ENCODE measurements at regions of chr1 and their contacts with region 1.

Region 1: GRCh38 chr1:84620720-84621313 is 46.6 kb upstream of the CTBS start:
- DNase-seq: peak; percentile 57
- ATAC-seq: peak; percentile 93
- H3K4me3 ChIP-seq: peak overlapping the region; percentile 72
- H3K27ac ChIP-seq: peak overlapping the region; percentile 77
- H3K4me1 ChIP-seq: peaks cover 6% of the 10 kb centered on the region
- H3K27me3 ChIP-seq: no peaks in the 10 kb centered on the region
- CTCF ChIP-seq: peak; percentile 63
- POLR2A ChIP-seq: no peak
- RAD21 ChIP-seq: peak; percentile 49

Region 2: DNA sequence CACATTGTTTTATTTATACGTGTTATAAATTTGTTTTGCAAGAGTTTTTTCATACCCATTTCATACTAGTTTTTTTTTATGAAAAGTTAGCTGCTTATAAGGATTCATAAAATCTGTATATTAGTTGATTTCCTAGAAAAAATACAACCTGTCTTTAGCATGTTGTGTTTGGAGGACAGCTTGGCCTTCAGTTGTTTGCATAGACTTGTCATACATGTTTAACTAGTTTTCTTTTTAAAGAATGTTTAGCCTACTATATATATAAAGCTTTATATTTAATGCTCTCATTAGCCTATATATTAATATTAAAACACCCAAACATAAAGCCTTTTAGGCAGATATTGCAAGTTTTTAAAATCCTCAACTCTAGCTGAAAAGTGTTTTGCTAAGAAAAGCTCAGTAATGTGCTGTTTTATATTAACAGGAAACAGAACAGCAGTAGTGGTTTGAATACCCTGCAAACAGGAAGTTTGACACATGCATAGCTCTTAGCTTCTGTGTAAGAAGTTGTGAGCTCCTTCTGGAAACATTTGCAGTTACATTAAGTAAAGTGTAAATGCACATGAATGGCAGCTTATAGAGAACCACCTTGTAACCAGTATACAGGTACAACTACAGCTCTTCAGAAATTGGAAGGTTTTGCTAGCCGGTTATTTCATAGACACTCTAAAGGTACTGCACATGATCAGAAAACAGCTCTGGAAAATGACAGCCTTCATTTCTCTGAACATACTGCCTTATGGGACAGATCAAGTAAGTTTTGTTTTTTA is 476.8 kb before region 1 on chr1 and contains the start of gene PRKACB:
- CTCF ChIA-PET with region 1: no interaction called
- POLR2A ChIA-PET with region 1: no interaction called
- dilution Hi-C with region 1: no loop called
- in situ Hi-C with region 1: loop called (anchors 25 kb)
- intact Hi-C with region 1: loop called (anchors 2 kb)
- DNase-seq: peak; percentile 62
- ATAC-seq: peak; percentile 68
- H3K4me3 ChIP-seq: no peak within 1 kb of the TSS
- H3K27ac ChIP-seq: no peak within 1 kb of the TSS
- H3K4me1 ChIP-seq: peaks cover 5% of the 10 kb centered on the region
- H3K27me3 ChIP-seq: no peaks in the 10 kb centered on the region
- CTCF ChIP-seq: no peak
- POLR2A ChIP-seq: no peak
- RAD21 ChIP-seq: no peak
- total RNA-seq, gene PRKACB: 8.2 and 14.2 TPM in 2 replicates

Region 3: GRCh38 chr1:84478876-84479868 is 141.6 kb before region 1 on chr1 and contains the start of gene RPF1:
- CTCF ChIA-PET with region 1: no interaction called
- POLR2A ChIA-PET with region 1: no interaction called
- dilution Hi-C with region 1: no loop called
- in situ Hi-C with region 1: no loop called
- intact Hi-C with region 1: loop called (anchors 1 kb)
- DNase-seq: peak; percentile 79
- ATAC-seq: peak; percentile 96
- H3K4me3 ChIP-seq: peak within 1 kb of the TSS; percentile 60
- H3K27ac ChIP-seq: peak within 1 kb of the TSS; percentile 78
- H3K4me1 ChIP-seq: peaks cover 3% of the 10 kb centered on the region
- H3K27me3 ChIP-seq: no peaks in the 10 kb centered on the region
- CTCF ChIP-seq: no peak
- POLR2A ChIP-seq: peak; percentile 78
- RAD21 ChIP-seq: no peak; the same call in 1 of the 2 replicates
- total RNA-seq, gene RPF1: 30.3 and 45.3 TPM in 2 replicates

Region 4: GRCh38 chr1:84573967-84574842 is 46.6 kb before region 1 on chr1 and contains the start of gene CTBS:
- CTCF ChIA-PET with region 1: no interaction called
- POLR2A ChIA-PET with region 1: no interaction called
- dilution Hi-C with region 1: no loop called
- in situ Hi-C with region 1: no loop called
- intact Hi-C with region 1: loop called (anchors 1 kb)
- DNase-seq: peak; percentile 88
- ATAC-seq: peak; percentile 98
- H3K4me3 ChIP-seq: peak within 1 kb of the TSS; percentile 94
- H3K27ac ChIP-seq: peak within 1 kb of the TSS; percentile 97
- H3K4me1 ChIP-seq: peaks cover 2% of the 10 kb centered on the region; the same call in 1 of the 2 replicates
- H3K27me3 ChIP-seq: no peaks in the 10 kb centered on the region
- CTCF ChIP-seq: no peak
- POLR2A ChIP-seq: peak; percentile 85
- RAD21 ChIP-seq: 0 out of 2 replicates have a peak, but pooled peaks have one; percentile 3
- total RNA-seq, gene CTBS: 5.9 and 8.1 TPM in 2 replicates

Region 5: GRCh38 chr1:84675105-84675504 is 54.3 kb after region 1 on chr1:
- CTCF ChIA-PET with region 1: no interaction called
- POLR2A ChIA-PET with region 1: no interaction called
- dilution Hi-C with region 1: no loop called
- in situ Hi-C with region 1: no loop called
- intact Hi-C with region 1: no loop called
- DNase-seq: peak; percentile 50
- ATAC-seq: no peak
- H3K4me3 ChIP-seq: no peak overlapping the region
- H3K27ac ChIP-seq: no peak overlapping the region
- H3K4me1 ChIP-seq: no peaks in the 10 kb centered on the region
- H3K27me3 ChIP-seq: no peaks in the 10 kb centered on the region
- CTCF ChIP-seq: no peak
- POLR2A ChIP-seq: no peak
- RAD21 ChIP-seq: no peak

Region 6: GRCh38 chr1:84936116-84936810 is 315.4 kb after region 1 on chr1:
- CTCF ChIA-PET with region 1: no interaction called
- POLR2A ChIA-PET with region 1: no interaction called
- dilution Hi-C with region 1: no loop called
- in situ Hi-C with region 1: loop called (anchors 25 kb)
- intact Hi-C with region 1: loop called (anchors 10 kb)
- DNase-seq: peak; percentile 72
- ATAC-seq: peak; percentile 92
- H3K4me3 ChIP-seq: no peak overlapping the region
- H3K27ac ChIP-seq: no peak overlapping the region
- H3K4me1 ChIP-seq: peaks cover 2% of the 10 kb centered on the region; the same call in 1 of the 2 replicates
- H3K27me3 ChIP-seq: peaks cover 12% of the 10 kb centered on the region
- CTCF ChIP-seq: peak; percentile 95
- POLR2A ChIP-seq: no peak
- RAD21 ChIP-seq: peak; percentile 96

Region 7: GRCh38 chr1:85102474-85102873 is 481.7 kb after region 1 on chr1:
- CTCF ChIA-PET with region 1: no interaction called
- POLR2A ChIA-PET with region 1: no interaction called
- dilution Hi-C with region 1: no loop called
- in situ Hi-C with region 1: no loop called
- intact Hi-C with region 1: no loop called
- DNase-seq: no peak
- ATAC-seq: no peak
- H3K4me3 ChIP-seq: no peak overlapping the region
- H3K27ac ChIP-seq: no peak overlapping the region
- H3K4me1 ChIP-seq: no peaks in the 10 kb centered on the region
- H3K27me3 ChIP-seq: peaks cover 3% of the 10 kb centered on the region; the same call in 1 of the 2 replicates
- CTCF ChIP-seq: no peak
- POLR2A ChIP-seq: no peak
- RAD21 ChIP-seq: no peak

Measured in IMR-90 (cell line).